ENCODE measurements at regions of chr7 and their contacts with region 1.

Region 1: DNA sequence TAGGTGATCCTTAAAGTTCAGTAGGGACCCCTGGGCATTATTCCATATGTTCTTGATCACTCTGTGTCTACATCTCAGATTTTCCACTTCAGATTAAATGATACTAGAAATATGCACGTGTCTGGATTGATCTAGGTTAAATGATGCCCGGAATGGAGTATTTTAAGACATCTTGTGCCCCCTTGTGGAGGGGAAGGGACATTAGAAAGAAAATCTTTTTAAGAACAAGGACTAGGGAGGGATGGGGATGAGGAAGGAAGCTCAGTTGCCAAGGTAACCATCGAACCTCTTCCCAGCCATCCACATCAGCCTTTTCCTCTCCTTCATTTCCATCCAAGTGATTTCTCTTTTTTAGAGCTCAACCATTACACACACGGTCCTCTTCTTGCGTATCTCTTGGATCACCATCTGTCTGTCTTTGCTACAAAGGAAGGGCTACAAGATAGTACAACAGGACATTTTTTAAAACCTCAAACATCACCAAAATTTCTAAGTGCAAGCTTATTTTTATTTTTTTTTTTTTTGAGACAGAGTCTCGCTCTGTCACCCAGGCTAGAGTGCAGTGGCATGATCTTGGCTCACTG is 40.5 kb downstream of the PRSS2 start:
- DNase-seq: peak; percentile 8
- H3K4me3 ChIP-seq: no peak overlapping the region
- H3K27ac ChIP-seq: no peak overlapping the region
- H3K27me3 ChIP-seq: no peaks in the 10 kb centered on the region
- CTCF ChIP-seq: peak; percentile 71

Region 2: GRCh38 chr7:142459551-142459963 is 351.7 kb before region 1 on chr7:
- CTCF ChIA-PET with region 1: interaction called, 14 read pairs
- POLR2A ChIA-PET with region 1: no interaction called
- DNase-seq: peak; percentile 59
- H3K4me3 ChIP-seq: no peak overlapping the region
- H3K27ac ChIP-seq: no peak overlapping the region
- H3K27me3 ChIP-seq: no peaks in the 10 kb centered on the region
- CTCF ChIP-seq: peak; percentile 74

Region 3: DNA sequence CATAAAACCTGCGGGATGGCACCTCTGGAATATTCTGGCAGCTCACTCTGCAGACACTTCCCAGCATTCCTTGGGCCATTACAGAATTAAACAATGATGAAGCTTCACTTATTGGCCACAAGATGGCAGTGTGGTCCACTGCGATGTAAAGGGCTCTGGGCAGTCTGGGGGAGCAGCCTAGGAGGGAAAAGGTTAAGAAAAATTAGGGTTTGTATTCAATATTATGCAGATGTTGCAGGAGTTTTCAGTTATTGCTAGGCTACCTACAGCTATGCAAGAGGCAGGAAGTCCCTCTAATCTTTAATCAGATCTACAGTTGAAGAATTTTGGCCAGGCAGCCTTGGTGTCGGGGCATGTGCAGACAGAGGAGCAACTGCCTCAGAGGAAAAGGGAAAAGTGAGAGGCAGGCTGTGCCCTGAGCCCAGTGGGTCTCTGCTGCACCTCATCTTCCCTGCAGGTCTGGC is 295.2 kb before region 1 on chr7:
- CTCF ChIA-PET with region 1: interaction called, 36 read pairs
- POLR2A ChIA-PET with region 1: no interaction called
- DNase-seq: peak; percentile 29
- H3K4me3 ChIP-seq: no peak overlapping the region
- H3K27ac ChIP-seq: no peak overlapping the region
- H3K27me3 ChIP-seq: peaks cover 11% of the 10 kb centered on the region
- CTCF ChIP-seq: peak; percentile 80

Region 4: GRCh38 chr7:142535123-142535779 is 276.0 kb before region 1 on chr7:
- CTCF ChIA-PET with region 1: interaction called, 43 read pairs
- POLR2A ChIA-PET with region 1: no interaction called
- DNase-seq: peak; percentile 69
- H3K4me3 ChIP-seq: no peak overlapping the region
- H3K27ac ChIP-seq: no peak overlapping the region
- H3K27me3 ChIP-seq: no peaks in the 10 kb centered on the region
- CTCF ChIP-seq: peak; percentile 92

Region 5: DNA sequence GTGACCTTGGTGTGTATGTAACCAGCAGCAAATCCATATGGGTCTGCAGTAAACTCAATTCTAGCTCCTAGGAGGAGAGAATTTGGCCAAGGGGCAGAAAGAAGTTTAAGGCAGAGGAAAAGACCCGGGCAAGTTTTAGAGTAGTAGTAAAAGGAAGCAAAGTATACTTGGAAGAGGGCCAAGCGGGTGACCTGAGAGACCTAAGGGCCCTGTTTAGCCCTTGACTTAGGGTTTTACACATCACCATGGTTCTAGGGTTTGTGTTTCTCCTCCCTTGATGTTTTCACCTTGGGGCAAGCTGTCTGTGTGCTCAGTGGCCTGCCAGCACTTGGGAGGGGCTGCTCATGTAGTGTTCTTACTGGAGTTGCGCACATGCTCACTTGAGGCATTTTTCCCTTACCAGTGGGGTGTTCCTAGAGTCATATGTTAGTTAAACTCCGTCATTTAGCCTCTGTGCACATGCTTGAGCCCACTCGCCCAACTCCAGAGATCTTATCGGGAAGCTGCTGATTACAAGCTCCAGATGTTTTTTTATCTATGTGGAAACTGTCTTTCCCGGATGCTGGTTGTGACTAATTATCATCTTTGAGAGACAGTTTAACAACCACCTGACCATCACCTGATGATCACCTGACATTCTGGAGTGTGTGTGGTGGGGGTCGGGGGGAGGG is 199.5 kb before region 1 on chr7:
- CTCF ChIA-PET with region 1: interaction called, 10 read pairs
- POLR2A ChIA-PET with region 1: no interaction called
- DNase-seq: no peak
- H3K4me3 ChIP-seq: no peak overlapping the region
- H3K27ac ChIP-seq: no peak overlapping the region
- H3K27me3 ChIP-seq: peaks cover 2% of the 10 kb centered on the region
- CTCF ChIP-seq: no peak

Region 6: GRCh38 chr7:142711746-142712619 is 99.3 kb before region 1 on chr7:
- CTCF ChIA-PET with region 1: no interaction called
- POLR2A ChIA-PET with region 1: no interaction called
- DNase-seq: no peak
- H3K4me3 ChIP-seq: no peak overlapping the region
- H3K27ac ChIP-seq: no peak overlapping the region
- H3K27me3 ChIP-seq: no peaks in the 10 kb centered on the region
- CTCF ChIP-seq: peak; percentile 67

Region 7: GRCh38 chr7:142796608-142797385 is 14.4 kb before region 1 on chr7:
- CTCF ChIA-PET with region 1: interaction called, 11 read pairs
- POLR2A ChIA-PET with region 1: no interaction called
- DNase-seq: no peak
- H3K4me3 ChIP-seq: no peak overlapping the region
- H3K27ac ChIP-seq: no peak overlapping the region
- H3K27me3 ChIP-seq: peaks cover 56% of the 10 kb centered on the region
- CTCF ChIP-seq: no peak